Ovary (tissue), 10 donors: ENCODE measurements at regions of chr1 and their contacts with region 1.

Region 1: DNA sequence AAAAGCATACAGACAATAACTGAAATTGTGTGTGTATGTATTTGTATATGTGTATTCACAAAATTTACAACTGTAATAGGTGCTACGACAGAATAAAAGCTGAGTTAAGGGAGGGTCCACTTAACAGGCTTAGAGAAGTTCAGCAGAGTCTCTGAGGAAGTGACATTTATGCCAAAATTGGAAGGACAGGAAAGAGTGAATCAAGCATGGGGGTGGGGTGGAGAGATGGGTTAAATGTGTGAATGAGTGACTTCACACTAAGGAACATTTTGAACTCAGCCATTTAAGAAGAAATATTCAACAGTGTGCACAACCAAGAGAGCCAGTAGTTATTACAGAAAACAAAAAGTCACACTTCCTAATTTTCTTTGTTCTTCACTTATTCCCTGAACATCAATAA is 53.8 kb upstream of the RGS1 start:
- DNase-seq: no peak
- H3K4me3 ChIP-seq: no peak overlapping the region
- H3K27ac ChIP-seq: no peak overlapping the region
- H3K4me1 ChIP-seq: no peaks in the 10 kb centered on the region
- H3K27me3 ChIP-seq: no peaks in the 10 kb centered on the region
- CTCF ChIP-seq: no peak
- EP300 ChIP-seq: no peak
- POLR2A ChIP-seq: no peak

Region 2: DNA sequence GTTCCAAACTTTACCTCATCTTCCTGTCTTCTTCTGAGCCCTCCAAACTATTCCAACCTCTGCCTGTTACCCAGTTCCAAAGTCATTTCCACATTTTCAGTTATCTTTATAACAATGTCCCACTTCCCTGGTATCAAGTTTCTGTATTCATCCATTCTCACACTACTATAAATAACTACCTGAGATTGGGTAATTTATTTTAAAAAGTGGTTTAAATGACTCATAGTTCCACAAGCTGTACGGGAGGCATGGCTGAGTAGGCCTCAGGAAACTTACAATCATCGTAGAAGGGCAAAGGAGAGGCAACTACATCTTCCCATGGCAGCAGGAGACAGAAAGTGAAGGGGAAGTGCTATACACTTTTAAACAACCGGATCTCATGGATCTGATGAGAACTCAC is 792.0 kb before region 1 on chr1:
- intact Hi-C with region 1: loop called in 1 of 4 experiments (anchors 10 kb)
- DNase-seq: no peak
- H3K4me3 ChIP-seq: no peak overlapping the region
- H3K27ac ChIP-seq: no peak overlapping the region
- H3K4me1 ChIP-seq: no peaks in the 10 kb centered on the region
- H3K27me3 ChIP-seq: no peaks in the 10 kb centered on the region
- CTCF ChIP-seq: no peak
- EP300 ChIP-seq: no peak
- POLR2A ChIP-seq: no peak